ENCODE measurements at regions of chr7 and their contacts with region 1.

Region 1: DNA sequence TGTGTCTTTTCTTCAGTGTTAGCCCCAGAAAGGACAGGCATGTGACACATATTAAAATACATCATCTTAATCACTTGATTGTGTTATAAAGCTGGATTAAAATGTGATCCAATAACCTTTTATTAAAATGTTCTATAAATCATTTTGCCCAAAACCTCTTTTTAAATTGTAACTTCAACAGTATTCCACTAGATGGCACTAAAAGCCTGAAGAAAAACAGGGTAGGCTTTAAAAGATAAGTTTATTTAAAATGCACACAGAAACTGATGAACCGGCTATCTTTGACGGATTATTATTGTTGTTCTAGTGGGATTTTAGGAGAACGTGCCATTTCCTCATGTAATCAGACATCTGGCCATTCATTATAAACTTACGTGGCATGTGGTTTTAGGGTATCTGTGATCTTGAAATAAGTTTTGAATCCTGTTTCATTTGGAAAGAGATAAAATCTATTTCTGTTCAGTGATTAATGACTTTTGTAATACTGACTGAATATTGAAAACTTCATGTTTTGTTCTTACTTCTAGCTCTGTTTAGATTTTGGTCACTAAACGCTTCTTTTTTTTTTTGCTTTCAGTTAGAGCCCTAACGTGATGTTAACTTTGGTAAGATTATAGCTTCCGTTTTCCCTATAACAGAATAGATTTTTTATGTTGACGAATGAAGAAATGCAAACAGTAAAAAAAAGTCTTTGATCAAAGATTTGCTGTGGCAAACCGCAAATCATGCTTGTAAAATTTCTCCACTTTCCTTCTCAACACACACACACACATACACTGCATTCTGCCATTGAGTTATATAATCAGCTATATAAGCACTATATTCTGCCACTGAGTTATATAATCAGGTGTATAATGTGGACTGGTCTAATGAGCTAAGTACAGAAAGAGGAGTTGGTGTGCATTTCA is 13.6 kb downstream of the VPS50 start:
- DNase-seq: no peak
- H3K4me3 Mint-ChIP-seq: no peak overlapping the region
- H3K27ac Mint-ChIP-seq: no peak overlapping the region
- H3K4me1 Mint-ChIP-seq: no peaks in the 10 kb centered on the region
- H3K27me3 Mint-ChIP-seq: peaks cover 2% of the 10 kb centered on the region

Region 2: DNA sequence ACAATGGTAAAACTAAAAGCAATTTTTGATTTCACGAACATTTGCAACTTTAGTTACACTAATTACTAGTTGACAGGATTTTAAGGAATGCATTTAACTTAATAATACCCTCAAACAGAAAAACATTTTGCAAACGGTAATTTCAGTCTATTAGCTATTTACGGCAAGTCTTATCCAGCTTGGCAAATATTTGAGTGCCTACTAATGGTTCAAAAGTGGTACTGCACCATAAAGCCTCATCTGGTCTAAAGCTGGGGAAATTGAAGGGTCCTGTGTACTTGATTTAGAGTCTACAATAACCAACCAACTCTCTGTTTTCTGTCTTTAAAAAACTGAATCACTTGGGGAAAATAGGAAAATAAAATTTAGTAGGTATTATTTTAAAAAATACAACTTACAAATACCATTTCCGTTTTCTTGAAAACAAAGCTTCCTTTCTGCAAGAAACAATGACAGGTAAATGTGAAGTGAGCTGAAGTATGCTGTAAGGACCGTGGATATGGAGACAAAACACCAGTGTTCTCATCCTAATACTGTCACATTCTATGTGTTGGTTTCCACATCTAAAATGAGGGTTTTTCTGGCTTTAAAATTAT is 128.7 kb after region 1 on chr7:
- intact Hi-C with region 1: loop called (anchors 5 kb)
- DNase-seq: no peak
- H3K4me3 Mint-ChIP-seq: no peak overlapping the region
- H3K27ac Mint-ChIP-seq: no peak overlapping the region
- H3K4me1 Mint-ChIP-seq: no peaks in the 10 kb centered on the region
- H3K27me3 Mint-ChIP-seq: peaks cover 6% of the 10 kb centered on the region

Region 3: DNA sequence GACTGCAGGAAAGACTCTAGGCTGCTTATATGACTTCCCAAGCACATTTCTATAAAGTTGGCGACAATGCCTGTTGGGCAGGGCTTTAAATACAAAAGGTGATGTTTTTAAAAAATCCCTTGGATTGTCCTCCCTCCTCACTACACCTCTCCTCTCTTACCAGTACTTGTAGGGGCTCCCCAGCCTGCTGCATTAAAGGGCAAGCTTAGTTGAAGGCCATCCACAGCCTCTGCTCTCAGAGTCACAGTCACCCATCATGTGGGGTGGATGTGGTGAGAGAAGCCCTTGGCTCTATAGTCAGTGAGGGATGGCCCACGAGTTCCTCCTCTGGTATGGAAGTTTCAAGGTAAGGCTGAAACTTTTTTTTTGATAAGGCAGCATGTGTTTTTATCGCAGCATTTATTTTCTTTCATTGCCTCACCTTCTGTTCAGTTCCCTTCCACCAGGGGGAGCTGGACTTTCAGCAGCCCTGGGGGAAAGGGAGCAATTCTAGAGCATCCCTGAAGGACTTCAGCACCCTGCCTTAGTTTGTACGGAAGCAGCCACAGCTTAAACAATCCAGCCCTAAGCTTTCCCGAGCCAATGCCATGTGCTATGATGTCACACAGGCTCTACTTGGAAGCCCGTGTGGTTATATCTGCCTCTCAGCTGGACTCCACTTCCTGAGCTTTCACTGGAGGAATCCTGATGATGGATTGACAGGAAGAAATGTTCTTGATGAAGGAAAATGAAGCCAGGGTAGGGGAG is 196.9 kb after region 1 on chr7:
- intact Hi-C with region 1: loop called (anchors 2 kb)
- DNase-seq: peak; percentile 1
- H3K4me3 Mint-ChIP-seq: no peak overlapping the region
- H3K27ac Mint-ChIP-seq: no peak overlapping the region
- H3K4me1 Mint-ChIP-seq: no peaks in the 10 kb centered on the region
- H3K27me3 Mint-ChIP-seq: peaks cover 2% of the 10 kb centered on the region

Region 4: GRCh38 chr7:93551063-93551904 is 305.5 kb after region 1 on chr7:
- intact Hi-C with region 1: loop called (anchors 1 kb)
- DNase-seq: no peak
- H3K4me3 Mint-ChIP-seq: no peak overlapping the region
- H3K27ac Mint-ChIP-seq: no peak overlapping the region
- H3K4me1 Mint-ChIP-seq: no peaks in the 10 kb centered on the region
- H3K27me3 Mint-ChIP-seq: peaks cover 2% of the 10 kb centered on the region

Region 5: DNA sequence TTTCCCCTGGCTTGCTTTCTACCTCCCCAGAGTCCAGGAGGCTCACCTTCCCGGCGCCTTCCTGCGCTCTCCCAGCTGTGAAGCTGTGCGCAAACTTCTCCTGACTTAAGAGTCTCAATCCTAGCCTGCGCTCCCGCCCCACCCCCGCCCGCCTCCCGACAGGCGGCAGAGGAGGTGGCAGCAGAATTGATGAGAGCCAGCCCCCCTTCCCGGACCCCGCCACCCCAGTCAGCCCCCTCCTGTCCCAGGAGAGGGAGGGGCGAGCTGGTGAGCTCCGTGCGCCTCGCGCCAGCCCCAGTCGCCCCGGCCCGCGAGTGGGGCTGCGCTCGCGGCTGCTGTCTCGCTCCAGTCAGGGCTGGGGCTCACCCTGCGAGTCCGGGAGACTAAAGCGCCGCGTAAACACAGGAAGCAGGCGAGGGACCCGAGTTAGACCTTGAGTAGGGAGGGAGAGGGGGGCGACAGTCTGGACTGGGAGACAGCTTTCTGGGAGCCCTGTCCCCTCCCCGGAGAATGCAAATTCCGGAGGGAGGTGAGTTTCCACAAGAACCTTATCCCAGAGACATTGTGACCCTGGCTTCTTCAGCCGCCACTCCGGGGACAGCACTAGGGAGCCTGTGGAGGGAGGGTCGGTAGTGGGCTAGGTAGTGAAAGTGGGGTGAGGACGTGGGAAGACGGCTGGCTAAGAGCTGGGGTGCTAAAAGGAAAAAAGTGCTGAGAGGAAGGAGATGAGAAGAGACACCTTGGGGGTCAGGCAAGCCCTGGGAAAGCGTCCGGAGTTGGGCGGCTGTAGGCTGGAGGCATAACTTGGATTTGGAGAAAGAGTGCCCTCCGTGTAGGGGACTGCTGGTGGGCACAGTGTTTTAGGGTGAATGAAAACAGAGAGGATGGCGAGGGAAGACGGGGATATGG is 329.1 kb after region 1 on chr7 and contains the start of gene CALCR:
- intact Hi-C with region 1: no loop called
- DNase-seq: no peak
- H3K4me3 Mint-ChIP-seq: no peak within 1 kb of the TSS
- H3K27ac Mint-ChIP-seq: no peak within 1 kb of the TSS
- H3K4me1 Mint-ChIP-seq: no peaks in the 10 kb centered on the region
- H3K27me3 Mint-ChIP-seq: peaks cover 28% of the 10 kb centered on the region
- total RNA-seq, gene CALCR: not detected in 2 replicates

Region 6: DNA sequence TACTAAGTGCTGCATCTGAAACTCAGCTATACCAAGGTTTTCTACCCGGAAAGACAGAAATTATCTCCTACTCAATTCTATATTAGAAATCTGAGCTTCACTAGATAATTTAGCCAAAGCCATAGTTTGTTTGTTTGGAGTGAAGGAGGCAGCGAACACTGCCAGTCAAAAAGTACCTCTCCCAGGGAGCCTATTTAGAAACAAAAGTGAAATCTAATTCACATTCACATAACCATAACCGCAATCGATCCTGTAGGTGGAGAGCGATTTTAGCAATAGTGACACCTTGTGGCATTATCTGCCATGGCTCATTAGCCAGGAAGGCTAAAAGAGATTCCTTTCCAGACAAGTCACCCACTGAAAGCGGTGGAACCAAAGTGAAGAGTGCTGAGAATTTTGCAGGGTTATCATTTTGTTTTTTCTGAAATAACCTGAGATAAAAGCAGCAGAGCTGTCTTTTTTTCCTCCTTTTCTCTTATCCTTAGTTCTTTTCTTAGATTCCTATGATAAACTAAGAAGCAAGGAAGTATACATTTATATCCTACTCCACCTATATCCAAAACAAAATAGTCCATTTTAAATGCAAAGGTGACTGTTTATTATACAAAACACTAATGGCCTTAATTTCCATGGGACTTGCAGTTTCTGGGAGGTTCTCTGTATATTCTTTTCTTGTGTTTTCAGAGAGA is 842.0 kb after region 1 on chr7:
- intact Hi-C with region 1: loop called (anchors 1 kb)
- DNase-seq: peak; percentile 41
- H3K4me3 Mint-ChIP-seq: peak overlapping the region; percentile 48
- H3K27ac Mint-ChIP-seq: no peak overlapping the region
- H3K4me1 Mint-ChIP-seq: peaks cover 7% of the 10 kb centered on the region
- H3K27me3 Mint-ChIP-seq: peaks cover 26% of the 10 kb centered on the region

Region 7: GRCh38 chr7:94436018-94436604 is 1190.3 kb after region 1 on chr7:
- intact Hi-C with region 1: loop called (anchors 5 kb)
- DNase-seq: peak; percentile 22
- H3K4me3 Mint-ChIP-seq: no peak overlapping the region
- H3K27ac Mint-ChIP-seq: no peak overlapping the region
- H3K4me1 Mint-ChIP-seq: no peaks in the 10 kb centered on the region
- H3K27me3 Mint-ChIP-seq: peaks cover 28% of the 10 kb centered on the region